Heart right ventricle (tissue), 16 donors: ENCODE measurements at regions of chr6 and their contacts with region 1.

Region 1: DNA sequence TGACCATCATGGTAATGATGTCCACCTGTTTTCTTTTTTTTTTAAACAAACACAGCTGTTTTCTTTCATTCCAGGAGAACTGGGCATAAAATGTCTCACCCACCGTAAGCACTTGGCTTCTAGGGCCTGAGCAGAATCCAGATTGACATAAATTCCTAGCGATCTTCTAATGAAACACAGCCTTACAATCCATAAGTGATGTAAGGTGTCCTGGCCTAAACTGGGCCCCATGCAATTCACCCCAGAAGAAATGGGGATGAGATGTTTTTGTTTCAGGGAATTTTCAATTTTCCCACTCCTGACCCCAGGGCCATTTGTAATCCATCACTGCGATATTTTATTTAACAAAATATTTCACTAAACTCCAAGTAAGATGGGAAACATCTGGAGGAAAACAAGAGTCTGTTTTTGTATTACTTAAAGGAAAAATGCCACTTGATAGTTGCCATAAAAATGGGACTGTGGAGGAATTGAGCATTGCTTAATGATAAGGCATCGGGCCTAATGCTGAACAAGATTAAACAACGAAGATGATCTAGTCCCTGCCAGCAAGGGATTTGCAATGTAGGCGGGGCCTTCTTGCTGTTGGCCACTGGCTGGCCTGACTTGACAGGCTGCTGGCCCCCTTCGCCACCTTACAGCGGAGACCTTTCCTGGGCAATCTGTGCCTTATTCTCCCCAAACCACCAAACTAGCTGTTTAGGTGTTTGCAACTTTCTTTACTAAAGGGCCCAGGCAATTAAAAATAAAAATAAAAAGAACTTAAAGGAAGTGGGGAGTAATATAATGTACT is 183.7 kb downstream of the CD109 start:
- DNase-seq: no peak
- ATAC-seq: peak in 2 of 8 donors; percentile 38 to 42
- H3K4me3 ChIP-seq: no peak overlapping the region
- H3K27ac ChIP-seq: peak overlapping the region in 6 of 10 donors; percentile 2 to 62 (median 31)
- H3K4me1 ChIP-seq: no peaks in the 10 kb centered on the region
- H3K27me3 ChIP-seq: no peaks in the 10 kb centered on the region
- CTCF ChIP-seq: no peak

Region 2: DNA sequence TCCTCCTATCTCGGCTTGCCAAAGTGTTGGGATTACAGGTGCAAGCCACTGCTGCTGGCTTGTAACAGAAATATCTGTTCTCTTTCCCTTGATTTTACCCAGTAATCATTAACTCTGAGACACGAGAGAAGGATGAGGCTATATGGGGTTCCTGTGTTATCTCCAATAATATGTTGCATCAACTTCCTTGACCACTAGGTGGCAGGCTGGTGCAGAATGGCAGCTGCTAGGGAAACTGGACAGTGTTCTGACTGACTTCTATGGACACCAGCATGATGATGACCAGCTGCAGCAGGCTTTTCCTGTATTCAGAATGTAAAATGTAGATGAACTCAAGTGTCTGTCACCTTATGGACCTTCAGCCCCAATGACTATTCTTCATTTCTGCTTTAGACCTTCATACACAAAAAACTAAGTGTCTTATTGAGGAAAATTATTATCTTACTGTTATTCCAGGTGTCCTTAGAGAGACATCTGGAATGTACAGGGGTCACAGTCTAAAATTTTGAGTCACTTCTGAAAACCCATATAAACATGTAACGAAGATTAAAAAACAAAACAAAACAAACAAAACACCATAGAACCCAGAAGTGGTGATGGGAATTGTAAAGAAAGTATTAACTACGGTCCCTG is 204.1 kb before region 1 on chr6:
- intact Hi-C with region 1: no loop called
- DNase-seq: peak; percentile 51 to 84
- ATAC-seq: peak; percentile 84 to 90 (median 88)
- H3K4me3 ChIP-seq: no peak overlapping the region
- H3K27ac ChIP-seq: no peak overlapping the region
- H3K4me1 ChIP-seq: peaks cover 0 to 11% (median 0%) of the 10 kb centered on the region in 9 donors
- H3K27me3 ChIP-seq: no peaks in the 10 kb centered on the region
- CTCF ChIP-seq: peak; percentile 88 to 97 (median 91)

Region 3: DNA sequence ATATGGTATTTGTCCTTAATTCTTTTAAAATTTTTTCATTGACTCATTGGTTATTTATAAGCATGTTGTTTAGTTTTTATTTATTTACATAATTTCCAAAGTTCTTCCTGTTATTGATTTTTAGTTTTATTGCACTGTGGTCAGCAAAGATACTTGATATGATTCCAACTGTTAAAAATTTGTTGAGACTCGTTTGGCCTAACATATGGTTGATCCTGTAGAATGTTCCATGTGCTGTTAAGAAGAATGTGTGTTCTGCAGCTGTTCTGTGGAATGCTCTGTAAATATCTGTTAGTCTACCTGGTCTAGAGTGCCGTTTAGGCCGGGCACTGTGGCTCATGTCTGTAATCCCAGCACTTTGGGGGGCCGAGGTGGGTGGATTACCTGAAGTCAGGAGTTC is 14.0 kb after region 1 on chr6:
- intact Hi-C with region 1: loop called in 1 of 10 experiments (anchors 1 kb)
- DNase-seq: no peak
- ATAC-seq: no peak
- H3K4me3 ChIP-seq: no peak overlapping the region
- H3K27ac ChIP-seq: no peak overlapping the region
- H3K4me1 ChIP-seq: no peaks in the 10 kb centered on the region
- H3K27me3 ChIP-seq: no peaks in the 10 kb centered on the region
- CTCF ChIP-seq: no peak